Gastrocnemius medialis (tissue), 4 donors: ENCODE measurements at regions of chr14 and their contacts with region 1.

Region 1: GRCh38 chr14:74945823-74946682 is 9.3 kb downstream of the PGF start:
- DNase-seq: peak; percentile 42 to 71
- ATAC-seq: peak; percentile 78 to 94
- H3K4me3 ChIP-seq: no peak overlapping the region
- H3K27ac ChIP-seq: peak overlapping the region in 3 of 4 donors; percentile 8 to 38 (median 37)
- H3K4me1 ChIP-seq: peaks cover 25 to 29% of the 10 kb centered on the region in 2 donors
- H3K27me3 ChIP-seq: no peaks in the 10 kb centered on the region
- CTCF ChIP-seq: peak; percentile 83 to 96 (median 92)
- POLR2A ChIP-seq: no peak

Region 2: GRCh38 chr14:73842851-73843250 is 1103.2 kb before region 1 on chr14:
- in situ Hi-C with region 1: no loop called
- intact Hi-C with region 1: no loop called
- DNase-seq: no peak
- ATAC-seq: peak in 1 of 2 donors; percentile 27
- H3K4me3 ChIP-seq: no peak overlapping the region
- H3K27ac ChIP-seq: no peak overlapping the region
- H3K4me1 ChIP-seq: no peaks in the 10 kb centered on the region
- H3K27me3 ChIP-seq: no peaks in the 10 kb centered on the region
- CTCF ChIP-seq: no peak
- POLR2A ChIP-seq: no peak

Region 3: GRCh38 chr14:74747237-74747636 is 198.8 kb before region 1 on chr14:
- in situ Hi-C with region 1: no loop called
- intact Hi-C with region 1: no loop called
- DNase-seq: no peak
- ATAC-seq: no peak
- H3K4me3 ChIP-seq: no peak overlapping the region
- H3K27ac ChIP-seq: no peak overlapping the region
- H3K4me1 ChIP-seq: no peaks in the 10 kb centered on the region
- H3K27me3 ChIP-seq: no peaks in the 10 kb centered on the region
- CTCF ChIP-seq: no peak
- POLR2A ChIP-seq: no peak

Region 4: GRCh38 chr14:74913986-74914573 is 32.0 kb before region 1 on chr14:
- in situ Hi-C with region 1: no loop called
- intact Hi-C with region 1: loop called (anchors 5 kb)
- DNase-seq: peak; percentile 69 to 77
- ATAC-seq: peak; percentile 67 to 70
- H3K4me3 ChIP-seq: no peak overlapping the region
- H3K27ac ChIP-seq: peak overlapping the region; percentile 29 to 64 (median 52)
- H3K4me1 ChIP-seq: peaks cover 43 to 45% of the 10 kb centered on the region in 2 donors
- H3K27me3 ChIP-seq: no peaks in the 10 kb centered on the region
- CTCF ChIP-seq: peak; percentile 70 to 86 (median 82)
- POLR2A ChIP-seq: no peak

Region 5: DNA sequence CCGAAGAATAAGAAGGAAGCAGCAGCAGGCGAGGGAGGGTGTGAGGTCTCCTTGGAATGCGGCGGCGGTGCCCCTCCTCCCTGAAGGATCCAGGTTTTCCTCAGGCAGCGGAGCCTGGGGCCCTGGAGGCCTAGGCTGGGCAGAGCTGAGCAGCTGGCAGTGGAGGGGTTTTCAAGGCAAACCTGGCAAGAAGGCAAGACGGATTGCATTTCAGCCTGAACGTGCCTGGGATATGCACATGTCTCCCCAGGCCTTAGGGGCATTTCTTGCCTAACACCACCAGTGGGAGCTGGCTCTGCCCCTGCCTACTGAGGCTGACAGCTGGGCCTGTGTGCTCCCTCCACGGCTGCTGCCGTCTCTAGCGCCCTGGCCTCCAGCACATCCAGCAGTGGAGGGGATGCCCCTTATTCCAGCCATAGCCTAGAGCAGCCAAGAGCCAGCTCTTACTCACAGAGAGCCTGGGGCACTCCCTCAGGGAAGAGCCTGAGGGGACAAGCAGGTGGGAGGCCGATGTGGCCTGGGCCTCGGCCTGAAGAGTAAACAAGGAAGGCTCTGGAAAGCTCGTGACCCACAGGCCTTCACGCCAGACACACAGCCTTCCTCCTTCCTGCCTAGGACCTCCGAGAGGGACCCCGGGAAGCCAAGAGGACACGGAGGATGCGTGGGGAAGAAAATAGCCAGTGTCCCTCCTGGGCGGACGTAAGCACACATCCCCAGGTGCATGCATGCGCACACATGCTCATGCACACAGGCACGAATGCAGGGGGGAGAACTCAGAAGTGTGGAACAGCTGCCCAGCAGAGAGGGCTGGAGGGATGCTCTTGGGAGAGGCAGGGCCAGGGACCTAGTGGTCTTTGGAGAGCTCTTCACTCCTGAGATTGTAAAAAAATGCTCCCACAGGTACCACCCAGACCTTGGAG is 33.6 kb after region 1 on chr14:
- in situ Hi-C with region 1: no loop called
- intact Hi-C with region 1: loop called (anchors 2 kb)
- DNase-seq: peak; percentile 75 to 88
- ATAC-seq: peak; percentile 78 to 89
- H3K4me3 ChIP-seq: no peak overlapping the region
- H3K27ac ChIP-seq: peak overlapping the region; percentile 67 to 79 (median 72)
- H3K4me1 ChIP-seq: peaks cover 40 to 46% of the 10 kb centered on the region in 2 donors
- H3K27me3 ChIP-seq: no peaks in the 10 kb centered on the region
- CTCF ChIP-seq: peak in 2 of 5 experiments; percentile 19
- POLR2A ChIP-seq: no peak

Region 6: DNA sequence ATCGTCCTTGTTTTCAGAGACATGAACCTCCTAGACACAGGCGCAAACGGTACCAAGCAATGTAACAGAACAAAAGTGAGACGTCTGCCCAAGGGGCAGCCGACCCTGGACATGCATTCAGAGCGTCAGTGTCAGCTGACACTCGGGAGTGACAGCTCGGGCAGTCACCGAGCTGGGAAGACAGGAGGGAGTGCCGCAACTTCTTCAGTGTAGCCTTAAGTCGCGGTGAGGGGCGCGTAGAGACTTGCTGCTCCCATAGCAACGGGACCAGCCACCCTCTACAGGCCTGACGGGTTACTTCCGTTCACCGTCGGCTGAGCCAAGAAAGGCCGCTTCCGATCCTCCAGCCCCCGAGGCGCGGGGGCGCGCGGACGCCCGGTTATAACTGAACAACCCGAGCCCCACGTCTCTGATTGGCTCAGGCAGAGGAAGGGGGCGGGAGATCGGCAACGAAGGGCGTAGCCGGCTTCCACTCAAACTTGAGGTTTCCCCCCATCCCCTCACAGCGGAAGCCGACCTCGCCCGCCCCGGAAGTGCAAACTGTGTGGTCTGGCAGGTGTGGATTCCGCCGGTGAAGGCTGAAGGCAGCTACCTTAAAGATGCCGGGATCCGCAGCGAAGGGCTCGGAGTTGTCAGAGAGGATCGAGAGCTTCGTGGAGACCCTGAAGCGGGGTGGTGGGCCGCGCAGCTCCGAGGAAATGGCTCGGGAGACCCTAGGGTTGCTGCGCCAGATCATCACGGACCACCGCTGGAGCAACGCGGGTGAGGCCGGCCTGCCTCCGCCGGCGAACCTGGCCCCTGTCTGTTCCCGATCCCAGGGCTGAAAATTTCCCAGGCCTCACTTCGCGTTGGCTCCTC is 56.6 kb after region 1 on chr14 and contains the start of gene EIF2B2:
- in situ Hi-C with region 1: no loop called
- intact Hi-C with region 1: loop called (anchors 2 kb)
- DNase-seq: peak; percentile 97 to 98
- ATAC-seq: peak; percentile 98 to 99
- H3K4me3 ChIP-seq: peak within 1 kb of the TSS; percentile 75 to 95 (median 89)
- H3K27ac ChIP-seq: peak within 1 kb of the TSS; percentile 82 to 94 (median 87)
- H3K4me1 ChIP-seq: peaks cover 12 to 14% of the 10 kb centered on the region in 2 donors
- H3K27me3 ChIP-seq: no peaks in the 10 kb centered on the region
- CTCF ChIP-seq: peak in 4 of 5 experiments; percentile 27 to 37 (median 33)
- POLR2A ChIP-seq: peak; percentile 67 to 80
- total RNA-seq, gene EIF2B2: 42.7 to 79.0 (median 69.9) TPM

Region 7: DNA sequence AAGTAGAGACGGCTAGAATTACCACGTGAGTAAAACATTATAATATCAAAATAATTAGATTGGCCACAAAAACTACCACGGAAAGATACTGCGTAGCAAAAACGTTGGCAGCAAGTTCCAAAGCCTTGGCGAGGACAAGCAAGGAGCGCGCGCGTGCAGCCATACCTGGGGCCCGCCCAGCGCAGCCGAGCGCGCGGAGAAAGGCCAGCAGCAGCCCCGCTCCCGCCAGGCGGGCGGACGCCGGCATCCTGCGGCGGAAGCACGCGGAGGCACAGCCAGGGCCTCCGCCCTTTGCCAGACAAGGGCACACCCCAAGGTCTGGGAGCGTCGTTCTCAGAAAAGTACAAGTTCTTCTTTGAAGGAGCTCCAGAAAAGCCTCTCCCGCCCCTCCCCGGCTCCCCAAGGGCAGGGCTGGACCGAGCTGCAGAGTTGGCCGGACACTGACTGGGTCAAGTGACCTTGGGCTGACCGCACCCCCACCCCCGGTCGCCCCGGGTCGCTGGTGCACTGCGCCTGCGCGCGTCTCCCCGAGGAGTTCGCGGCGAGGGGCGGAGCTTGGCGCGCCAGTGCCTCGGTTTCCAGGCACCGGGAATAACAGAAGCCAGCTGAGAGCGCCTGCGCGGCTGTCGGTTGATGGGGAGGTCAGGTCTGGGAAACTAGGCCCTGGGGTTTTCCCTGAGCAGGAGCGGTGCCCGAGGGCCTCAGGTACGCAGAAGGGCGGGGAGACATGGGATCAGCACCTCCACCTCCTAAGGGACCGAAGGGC is 123.2 kb after region 1 on chr14 and contains the start of gene ZC2HC1C:
- in situ Hi-C with region 1: no loop called
- intact Hi-C with region 1: loop called (anchors 5 kb)
- DNase-seq: peak; percentile 96 to 99
- ATAC-seq: peak; percentile 79 to 85
- H3K4me3 ChIP-seq: peak within 1 kb of the TSS; percentile 46 to 64 (median 60)
- H3K27ac ChIP-seq: peak within 1 kb of the TSS; percentile 90 to 95 (median 93)
- H3K4me1 ChIP-seq: peaks cover 45 to 57% of the 10 kb centered on the region in 2 donors
- H3K27me3 ChIP-seq: no peaks in the 10 kb centered on the region
- CTCF ChIP-seq: no peak
- POLR2A ChIP-seq: peak; percentile 85 to 87
- total RNA-seq, gene ZC2HC1C: 5.3 to 13.1 (median 7.3) TPM

Region 8: DNA sequence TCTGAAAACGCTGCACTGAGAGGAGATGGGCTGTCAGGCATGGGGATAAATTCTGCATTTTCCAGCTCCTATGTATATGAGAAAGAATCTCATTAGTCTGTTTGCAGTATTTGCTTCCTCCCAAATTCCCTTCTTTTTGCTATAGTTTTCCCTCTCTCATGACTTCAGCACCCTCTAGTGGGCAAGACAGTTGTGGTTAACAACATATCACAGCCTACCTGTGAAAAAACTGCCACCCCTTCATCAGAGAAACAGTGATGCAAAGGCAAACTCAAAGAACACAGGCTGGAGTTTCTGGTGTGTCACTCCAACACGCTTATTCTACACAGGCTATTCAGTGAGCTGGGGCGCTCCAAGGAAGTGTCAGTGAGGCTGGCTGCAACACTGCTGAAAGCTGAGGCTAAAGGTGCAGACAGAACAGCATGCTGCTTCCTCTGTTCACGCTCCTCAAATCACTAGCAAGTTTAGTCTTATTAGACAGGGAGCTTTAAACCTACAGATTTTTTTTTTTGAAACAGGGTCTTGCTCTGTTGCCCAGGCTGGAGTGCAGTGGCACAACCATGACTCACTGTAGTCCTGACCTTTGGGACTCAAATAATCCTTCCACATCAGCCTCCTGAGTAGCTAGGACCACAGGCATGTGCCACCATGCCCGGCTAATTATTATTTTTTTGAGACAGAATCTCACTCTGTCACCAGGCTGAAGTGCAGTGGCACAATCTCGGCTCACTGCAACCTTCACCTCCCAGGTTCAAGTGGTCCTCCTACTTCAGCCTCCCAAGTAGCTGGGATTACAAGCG is 142.7 kb after region 1 on chr14:
- in situ Hi-C with region 1: loop called in 2 of 4 experiments (anchors 25 kb)
- intact Hi-C with region 1: loop called (anchors 1 kb)
- DNase-seq: peak in 1 of 2 donors; percentile 9
- ATAC-seq: peak; percentile 44 to 58
- H3K4me3 ChIP-seq: no peak overlapping the region
- H3K27ac ChIP-seq: no peak overlapping the region
- H3K4me1 ChIP-seq: peaks cover 0 to 13% of the 10 kb centered on the region in 2 donors
- H3K27me3 ChIP-seq: no peaks in the 10 kb centered on the region
- CTCF ChIP-seq: peak; percentile 72 to 83 (median 77)
- POLR2A ChIP-seq: no peak

Region 9: DNA sequence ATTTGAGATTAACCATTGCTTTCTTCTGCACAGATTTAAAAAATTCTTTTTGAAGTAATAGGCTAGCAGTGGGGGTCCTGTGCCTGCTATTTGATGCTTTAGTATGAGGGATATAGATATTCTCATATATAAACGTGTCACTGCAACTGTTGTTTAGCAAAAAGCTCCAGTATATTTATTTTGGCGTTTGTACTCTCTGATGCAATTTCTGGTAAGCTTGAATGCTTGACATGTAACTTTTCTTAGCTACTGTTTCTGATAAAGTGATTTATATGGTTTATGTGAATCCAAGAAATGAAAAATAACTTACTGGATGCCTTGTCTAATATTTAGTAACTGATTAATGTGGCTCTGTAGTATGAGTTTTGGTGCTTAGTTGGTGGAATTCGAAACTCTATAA is 792.1 kb after region 1 on chr14:
- in situ Hi-C with region 1: no loop called
- intact Hi-C with region 1: no loop called
- DNase-seq: no peak
- ATAC-seq: no peak
- H3K4me3 ChIP-seq: no peak overlapping the region
- H3K27ac ChIP-seq: no peak overlapping the region
- H3K4me1 ChIP-seq: no peaks in the 10 kb centered on the region
- H3K27me3 ChIP-seq: no peaks in the 10 kb centered on the region
- CTCF ChIP-seq: no peak
- POLR2A ChIP-seq: no peak